ENCODE measurements at regions of chr21 and their contacts with region 1.

Region 1: GRCh38 chr21:28215214-28215954 is 777.3 kb downstream of the LTN1 start:
- DNase-seq: peak in 1 of 2 donors; percentile 18
- ATAC-seq: peak in 7 of 8 donors; percentile 80 to 100 (median 95)
- H3K4me3 ChIP-seq: no peak overlapping the region
- H3K27ac ChIP-seq: peak overlapping the region; percentile 14 to 73 (median 57)
- H3K4me1 ChIP-seq: peaks cover 0 to 27% (median 16%) of the 10 kb centered on the region in 9 donors
- H3K27me3 ChIP-seq: no peaks in the 10 kb centered on the region
- CTCF ChIP-seq: no peak

Region 2: DNA sequence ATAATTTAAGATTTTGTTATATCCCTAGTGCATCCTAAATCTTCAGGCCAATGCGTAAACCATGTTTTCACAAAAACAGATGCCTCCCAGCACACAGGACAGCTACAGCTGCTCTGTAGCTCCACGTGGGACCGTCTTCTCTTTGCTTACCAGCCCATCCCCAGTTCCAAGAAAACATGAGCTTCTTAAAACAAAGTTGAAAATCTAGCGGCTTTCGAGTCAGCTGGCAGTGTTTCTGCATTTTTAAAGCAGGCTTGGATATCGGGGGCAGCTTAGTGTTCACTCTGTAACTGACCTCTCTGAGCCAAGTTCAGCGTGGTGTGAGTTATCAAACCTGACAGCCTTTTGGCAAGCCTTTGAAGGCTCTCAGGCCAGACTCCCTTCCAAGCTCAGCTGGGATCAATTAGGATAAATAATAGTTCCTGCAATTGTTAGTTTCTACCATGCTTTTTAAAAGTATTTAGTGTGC is 104.2 kb before region 1 on chr21:
- intact Hi-C with region 1: loop called in 1 of 10 experiments (anchors 10 kb)
- DNase-seq: peak; percentile 14 to 83
- ATAC-seq: peak; percentile 96 to 100 (median 98)
- H3K4me3 ChIP-seq: peak overlapping the region in 5 of 10 donors; percentile 8 to 34 (median 20)
- H3K27ac ChIP-seq: peak overlapping the region in 8 of 10 donors; percentile 22 to 78 (median 62)
- H3K4me1 ChIP-seq: peaks cover 0 to 24% (median 11%) of the 10 kb centered on the region in 9 donors
- H3K27me3 ChIP-seq: no peaks in the 10 kb centered on the region
- CTCF ChIP-seq: no peak

Region 3: DNA sequence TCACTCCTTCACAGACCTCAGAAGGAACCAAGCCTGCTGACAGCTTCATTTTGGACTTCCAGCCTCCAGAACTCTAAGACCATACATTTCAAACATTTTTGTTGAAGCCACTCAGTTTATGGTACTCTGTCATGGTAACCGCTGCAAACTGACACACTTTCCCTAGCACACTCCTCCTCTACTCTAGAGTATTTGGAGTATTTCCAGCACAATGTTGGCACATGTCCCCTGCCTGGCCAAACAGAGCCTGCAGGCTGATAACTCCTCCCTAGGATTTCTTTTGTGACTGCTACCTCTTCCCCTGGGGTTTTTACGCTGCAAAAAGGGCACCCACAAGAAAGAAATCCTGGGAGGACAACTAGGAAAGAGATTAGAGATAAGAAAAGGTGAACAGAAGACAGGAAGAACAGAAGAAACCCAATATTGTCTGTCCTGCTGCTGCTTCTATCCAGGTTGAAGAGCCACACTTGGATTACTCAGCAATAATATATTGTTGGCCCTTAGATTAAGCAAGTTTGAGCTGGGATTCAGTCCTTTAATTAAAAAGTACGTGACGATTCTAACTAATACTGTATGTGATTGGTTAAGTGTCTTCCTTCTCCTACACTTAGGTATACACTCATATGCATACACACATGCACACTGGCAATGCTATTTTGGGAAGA is 66.9 kb before region 1 on chr21:
- intact Hi-C with region 1: no loop called
- DNase-seq: peak in 1 of 2 donors; percentile 50
- ATAC-seq: peak; percentile 61 to 92 (median 86)
- H3K4me3 ChIP-seq: no peak overlapping the region
- H3K27ac ChIP-seq: peak overlapping the region in 4 of 10 donors; percentile 32 to 53 (median 38)
- H3K4me1 ChIP-seq: peaks cover 0 to 12% (median 0%) of the 10 kb centered on the region in 9 donors
- H3K27me3 ChIP-seq: no peaks in the 10 kb centered on the region
- CTCF ChIP-seq: no peak

Measured in heart right ventricle (tissue), 16 donors.